ENCODE measurements at regions of chr4 and their contacts with region 1.

Region 1: GRCh38 chr4:15649914-15650545 is 5.1 kb downstream of the FBXL5 start:
- DNase-seq: peak; percentile 79
- H3K4me3 ChIP-seq: no peak overlapping the region
- H3K27ac ChIP-seq: no peak overlapping the region
- H3K4me1 ChIP-seq: peaks cover 43% of the 10 kb centered on the region
- CTCF ChIP-seq: peak; percentile 98

Region 2: DNA sequence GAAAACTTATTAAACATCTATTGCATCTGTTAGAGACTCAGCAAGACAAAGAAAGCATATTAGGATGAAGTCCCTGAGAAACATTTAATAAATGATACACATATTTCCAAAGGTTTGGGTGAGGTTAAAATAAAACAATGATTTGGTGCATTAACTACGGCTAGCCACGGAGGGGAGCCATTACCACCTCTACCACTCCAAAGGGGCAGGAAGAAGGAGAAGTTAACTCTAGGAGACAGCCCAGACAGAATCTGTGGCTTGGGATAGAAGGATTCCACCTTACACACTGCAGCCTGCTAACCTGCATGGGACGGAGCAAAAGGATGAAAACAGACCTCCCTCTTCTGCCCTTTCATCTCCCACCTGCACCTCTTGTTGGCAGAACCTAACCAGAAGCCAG is 411.3 kb before region 1 on chr4:
- CTCF ChIA-PET with region 1: no interaction called
- POLR2A ChIA-PET with region 1: no interaction called
- intact Hi-C with region 1: loop called (anchors 2 kb)
- DNase-seq: peak; percentile 30
- H3K4me3 ChIP-seq: no peak overlapping the region
- H3K27ac ChIP-seq: no peak overlapping the region
- H3K4me1 ChIP-seq: no peaks in the 10 kb centered on the region
- CTCF ChIP-seq: peak; percentile 82

Region 3: DNA sequence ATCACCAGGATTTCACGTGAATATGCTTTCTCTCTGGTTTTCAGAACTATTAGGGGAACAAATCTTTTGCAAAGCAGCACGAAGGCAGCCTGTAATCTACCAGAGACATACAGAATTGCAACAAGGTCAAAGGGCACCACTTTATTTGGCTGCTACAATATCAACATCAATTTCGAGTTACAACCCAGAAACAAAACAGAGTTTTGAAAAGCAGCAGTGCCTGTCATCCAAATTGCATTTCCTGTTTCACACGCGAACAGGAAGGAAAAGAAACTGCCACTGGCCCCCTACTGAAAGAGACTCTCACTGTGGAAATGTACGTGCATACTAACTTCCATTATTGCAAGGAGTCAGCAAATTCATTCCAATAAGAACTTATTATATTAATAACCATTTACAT is 239.3 kb before region 1 on chr4:
- CTCF ChIA-PET with region 1: no interaction called
- POLR2A ChIA-PET with region 1: interaction called, 3 read pairs
- intact Hi-C with region 1: loop called (anchors 5 kb)
- DNase-seq: peak; percentile 62
- H3K4me3 ChIP-seq: peak overlapping the region; percentile 34
- H3K27ac ChIP-seq: peak overlapping the region; percentile 19
- H3K4me1 ChIP-seq: peaks cover 41% of the 10 kb centered on the region
- CTCF ChIP-seq: no peak

Region 4: GRCh38 chr4:15479089-15479912 is 170.7 kb before region 1 on chr4:
- CTCF ChIA-PET with region 1: no interaction called
- POLR2A ChIA-PET with region 1: no interaction called
- intact Hi-C with region 1: loop called (anchors 1 kb)
- DNase-seq: peak; percentile 44
- H3K4me3 ChIP-seq: no peak overlapping the region
- H3K27ac ChIP-seq: no peak overlapping the region
- H3K4me1 ChIP-seq: no peaks in the 10 kb centered on the region
- CTCF ChIP-seq: peak; percentile 80

Region 5: GRCh38 chr4:15695240-15695699 is 45.2 kb after region 1 on chr4:
- CTCF ChIA-PET with region 1: no interaction called
- POLR2A ChIA-PET with region 1: no interaction called
- intact Hi-C with region 1: no loop called
- DNase-seq: no peak
- H3K4me3 ChIP-seq: no peak overlapping the region
- H3K27ac ChIP-seq: no peak overlapping the region
- H3K4me1 ChIP-seq: no peaks in the 10 kb centered on the region
- CTCF ChIP-seq: no peak

Region 6: GRCh38 chr4:16001484-16001858 is 351.4 kb after region 1 on chr4:
- CTCF ChIA-PET with region 1: no interaction called
- POLR2A ChIA-PET with region 1: no interaction called
- intact Hi-C with region 1: loop called (anchors 5 kb)
- DNase-seq: peak; percentile 75
- H3K4me3 ChIP-seq: no peak overlapping the region
- H3K27ac ChIP-seq: no peak overlapping the region
- H3K4me1 ChIP-seq: no peaks in the 10 kb centered on the region
- CTCF ChIP-seq: peak; percentile 92

Measured in OCI-LY7 (cell line).